Heart left ventricle (tissue), 16 donors: ENCODE measurements at regions of chr2 and their contacts with region 1.

Region 1: DNA sequence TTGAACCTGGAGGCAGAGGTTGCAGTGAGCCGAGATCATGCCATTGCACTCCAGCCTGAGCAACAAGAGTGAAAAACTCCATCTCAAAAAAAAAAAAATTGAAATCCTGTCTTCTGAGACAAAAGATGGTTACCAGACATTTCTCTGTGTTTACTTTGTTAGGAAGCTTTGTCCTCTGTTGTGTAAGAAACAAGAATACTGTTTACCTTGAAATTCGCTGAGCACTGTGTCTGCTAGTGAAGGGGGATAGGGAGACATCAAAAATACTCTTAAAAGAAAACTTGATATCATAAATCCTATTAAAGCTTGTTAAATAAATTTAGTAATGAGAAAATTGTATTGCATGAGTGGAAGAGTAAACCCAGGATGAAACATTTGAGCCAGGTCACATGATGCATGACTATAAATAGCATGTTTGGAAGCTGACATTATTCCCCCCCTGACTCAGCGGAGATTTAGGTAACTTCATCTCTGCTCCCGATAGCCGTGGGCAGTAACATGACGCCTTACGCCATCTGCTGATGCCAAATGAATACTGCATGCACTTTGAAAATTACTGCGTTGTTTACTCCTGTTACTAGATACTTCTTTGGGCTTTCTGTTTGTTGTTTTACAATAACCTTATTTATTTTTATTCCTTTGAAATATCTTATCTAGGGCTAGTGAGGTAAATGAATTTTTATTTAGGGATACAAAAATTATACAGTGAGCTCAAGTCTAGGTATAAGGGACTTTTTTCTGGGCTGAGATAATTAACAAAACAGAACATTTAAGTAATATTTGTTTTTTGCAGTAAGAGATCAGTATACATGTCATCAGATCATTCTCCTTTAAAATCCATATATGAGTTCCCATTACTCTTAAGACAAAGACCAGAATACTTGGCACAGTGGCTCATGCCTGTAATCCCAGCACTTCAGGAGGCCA is 134.9 kb downstream of the MAP3K20 start:
- DNase-seq: peak in 4 of 5 donors; percentile 68 to 83 (median 74)
- ATAC-seq: peak; percentile 86 to 92 (median 91)
- H3K4me3 ChIP-seq: no peak overlapping the region
- H3K27ac ChIP-seq: peak overlapping the region in 11 of 12 donors; percentile 8 to 85 (median 69)
- H3K4me1 ChIP-seq: peaks cover 0 to 61% (median 22%) of the 10 kb centered on the region in 12 donors
- H3K27me3 ChIP-seq: no peaks in the 10 kb centered on the region
- CTCF ChIP-seq: peak; percentile 77 to 96 (median 92)
- POLR2A ChIP-seq: no peak

Region 2: DNA sequence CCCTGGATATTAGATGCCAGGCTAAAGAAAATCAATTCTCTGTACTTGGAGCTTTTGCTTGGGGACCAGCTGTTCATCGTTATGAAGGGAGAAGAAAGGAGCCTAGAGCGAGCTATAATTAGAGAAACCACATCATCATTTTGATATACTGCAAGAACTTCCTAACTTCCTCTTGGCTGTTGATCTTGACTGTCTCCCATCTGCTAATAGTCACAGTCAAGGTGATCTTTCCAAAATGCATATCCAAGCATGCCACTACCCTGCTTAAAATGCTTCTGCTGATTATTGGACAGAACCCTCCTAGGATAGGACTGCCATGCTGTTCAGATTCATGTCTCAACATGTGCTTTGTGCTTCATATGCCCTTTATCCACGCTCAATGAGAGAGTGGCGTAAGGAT is 420.1 kb before region 1 on chr2:
- intact Hi-C with region 1: loop called in 1 of 10 experiments (anchors 10 kb)
- DNase-seq: no peak
- ATAC-seq: peak; percentile 39 to 82 (median 58)
- H3K4me3 ChIP-seq: no peak overlapping the region
- H3K27ac ChIP-seq: peak overlapping the region in 1 of 12 donors; percentile 4
- H3K4me1 ChIP-seq: peaks cover 0 to 8% (median 0%) of the 10 kb centered on the region in 12 donors
- H3K27me3 ChIP-seq: no peaks in the 10 kb centered on the region
- CTCF ChIP-seq: no peak
- POLR2A ChIP-seq: no peak

Region 3: GRCh38 chr2:172972005-172972619 is 238.4 kb before region 1 on chr2:
- intact Hi-C with region 1: loop called in 3 of 10 experiments (anchors 5 kb)
- DNase-seq: peak in 3 of 5 donors; percentile 30 to 49 (median 42)
- ATAC-seq: peak in 2 of 4 donors; percentile 35 to 56
- H3K4me3 ChIP-seq: no peak overlapping the region
- H3K27ac ChIP-seq: no peak overlapping the region
- H3K4me1 ChIP-seq: peaks cover 0 to 43% (median 23%) of the 10 kb centered on the region in 12 donors
- H3K27me3 ChIP-seq: no peaks in the 10 kb centered on the region
- CTCF ChIP-seq: peak; percentile 56 to 88 (median 74)
- POLR2A ChIP-seq: no peak

Region 4: DNA sequence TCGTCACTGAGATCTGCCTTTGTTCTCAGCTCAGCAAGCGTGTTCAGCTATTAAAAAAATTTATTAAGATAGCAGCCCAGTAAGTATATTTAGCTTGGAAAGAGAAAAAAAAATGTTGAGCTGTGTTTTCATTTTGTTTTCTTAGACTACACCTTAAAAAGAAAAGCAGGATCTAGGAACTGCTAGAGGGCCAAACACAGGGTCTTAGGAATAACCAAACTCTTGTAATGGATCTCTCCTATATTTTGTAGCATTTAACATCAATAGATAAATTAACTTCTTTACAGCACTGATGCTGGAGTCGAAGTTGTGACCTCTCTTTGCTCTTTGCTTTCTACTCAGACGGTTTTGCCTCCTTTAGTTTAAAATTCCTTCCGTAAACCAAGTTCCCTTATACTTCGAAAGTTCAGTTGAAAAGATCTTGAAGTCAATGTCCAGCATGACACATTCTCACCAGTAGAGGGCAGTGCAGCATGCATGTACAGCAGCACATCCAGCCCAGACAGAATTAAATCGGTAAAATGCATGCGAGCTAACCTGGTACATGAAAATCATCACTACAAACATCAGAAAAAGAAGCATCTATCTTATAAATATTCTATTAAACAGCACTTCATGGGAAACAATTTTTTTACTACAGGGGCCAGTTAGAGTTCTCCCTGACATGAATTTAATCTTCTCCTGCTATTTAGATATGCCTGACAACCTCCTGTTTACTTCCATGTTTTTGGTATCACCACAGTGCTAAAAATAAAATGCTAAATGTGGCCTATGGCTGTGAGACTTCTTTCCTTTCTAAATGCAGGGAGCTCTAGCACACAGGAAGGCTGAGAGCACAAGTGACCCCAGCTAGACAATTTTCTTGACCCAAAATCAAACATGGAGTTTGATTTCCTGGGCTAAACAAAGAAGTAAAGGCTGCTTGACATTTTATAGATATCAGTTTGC is 183.1 kb before region 1 on chr2:
- intact Hi-C with region 1: loop called (anchors 1 to 2 kb)
- DNase-seq: peak in 4 of 5 donors; percentile 79 to 89 (median 86)
- ATAC-seq: peak; percentile 77 to 88 (median 82)
- H3K4me3 ChIP-seq: peak overlapping the region in 1 of 12 donors; percentile 7
- H3K27ac ChIP-seq: peak overlapping the region; percentile 68 to 93 (median 86)
- H3K4me1 ChIP-seq: peaks cover 0 to 41% (median 25%) of the 10 kb centered on the region in 12 donors
- H3K27me3 ChIP-seq: no peaks in the 10 kb centered on the region
- CTCF ChIP-seq: peak; percentile 91 to 98 (median 96)
- POLR2A ChIP-seq: no peak

Region 5: GRCh38 chr2:173090276-173090877 is 120.2 kb before region 1 on chr2:
- intact Hi-C with region 1: loop called in 4 of 10 experiments (anchors 5 kb)
- DNase-seq: peak in 4 of 5 donors; percentile 34 to 66 (median 50)
- ATAC-seq: peak; percentile 57 to 83 (median 74)
- H3K4me3 ChIP-seq: peak overlapping the region in 7 of 12 donors; percentile 4 to 34 (median 30)
- H3K27ac ChIP-seq: peak overlapping the region; percentile 48 to 85 (median 75)
- H3K4me1 ChIP-seq: peaks cover 0 to 77% (median 22%) of the 10 kb centered on the region in 12 donors
- H3K27me3 ChIP-seq: no peaks in the 10 kb centered on the region
- CTCF ChIP-seq: no peak
- POLR2A ChIP-seq: no peak

Region 6: DNA sequence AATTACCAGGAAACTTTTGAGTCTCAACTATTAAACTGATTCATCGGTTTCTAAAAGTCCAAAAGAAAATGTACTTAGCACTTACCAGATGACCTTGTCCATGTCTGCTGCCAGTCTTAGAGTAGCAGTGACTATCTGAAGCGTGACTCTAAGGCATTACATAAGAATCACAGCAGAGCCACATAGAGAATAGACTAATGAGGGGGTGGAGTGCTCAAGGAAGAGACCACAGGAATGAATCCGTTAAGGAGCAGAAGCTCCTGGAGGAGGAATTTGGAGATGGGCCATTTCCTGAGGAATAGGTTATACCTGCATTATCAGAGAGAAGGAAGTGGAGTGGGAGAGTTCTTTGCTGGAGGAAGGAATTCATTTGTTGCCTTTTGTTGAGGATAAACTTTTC is 18.9 kb before region 1 on chr2:
- intact Hi-C with region 1: loop called in 1 of 10 experiments (anchors 2 kb)
- DNase-seq: no peak
- ATAC-seq: peak in 3 of 4 donors; percentile 31 to 59 (median 44)
- H3K4me3 ChIP-seq: no peak overlapping the region
- H3K27ac ChIP-seq: peak overlapping the region in 10 of 12 donors; percentile 9 to 79 (median 60)
- H3K4me1 ChIP-seq: peaks cover 3 to 92% (median 44%) of the 10 kb centered on the region in 12 donors
- H3K27me3 ChIP-seq: no peaks in the 10 kb centered on the region
- CTCF ChIP-seq: no peak
- POLR2A ChIP-seq: no peak